Activated CD8-positive, alpha-beta T cell treated with anti-CD3 and anti-CD28 coated beads for 36 hours (primary cell): ENCODE measurements at regions of chr7 and their contacts with region 1.

Region 1: GRCh38 chr7:116786791-116787443 is 75.5 kb upstream of the CAPZA2 start:
- DNase-seq: peak; percentile 48
- ATAC-seq: peak; percentile 96
- H3K4me3 Mint-ChIP-seq: no peak overlapping the region
- H3K27ac Mint-ChIP-seq: no peak overlapping the region
- H3K4me1 Mint-ChIP-seq: no peaks in the 10 kb centered on the region
- H3K27me3 Mint-ChIP-seq: peaks cover 2% of the 10 kb centered on the region
- CTCF ChIP-seq: no peak

Region 2: GRCh38 chr7:116671681-116672595 is 115.0 kb before region 1 on chr7 and contains the start of gene MET:
- CTCF ChIA-PET with region 1: interaction called, 6 read pairs
- POLR2A ChIA-PET with region 1: no interaction called
- intact Hi-C with region 1: loop called (anchors 10 kb)
- DNase-seq: peak; percentile 74
- ATAC-seq: peak; percentile 92
- H3K4me3 Mint-ChIP-seq: peak within 1 kb of the TSS; percentile 70
- H3K27ac Mint-ChIP-seq: no peak within 1 kb of the TSS
- H3K4me1 Mint-ChIP-seq: peaks cover 11% of the 10 kb centered on the region
- H3K27me3 Mint-ChIP-seq: peaks cover 55% of the 10 kb centered on the region
- CTCF ChIP-seq: no peak
- total RNA-seq, gene MET: 0.16 to 0.27 TPM